HepG2 (cell line): ENCODE measurements at regions of chr21 and their contacts with region 1.

Region 1: GRCh38 chr21:36747815-36748383 is 49.0 kb downstream of the SIM2 start:
- DNase-seq: peak; percentile 23
- ATAC-seq: peak; percentile 87
- H3K4me3 ChIP-seq: peak overlapping the region; percentile 60 to 73 (median 68); a peak in 5 of 6 replicates
- H3K27ac ChIP-seq: no peak overlapping the region
- H3K4me1 ChIP-seq: peaks cover 12% of the 10 kb centered on the region
- H3K27me3 ChIP-seq: no peaks in the 10 kb centered on the region
- CTCF ChIP-seq: peak; percentile 34; the same call in 1 of the 2 replicates
- EP300 ChIP-seq: no peak
- POLR2A ChIP-seq: no peak
- RAD21 ChIP-seq: peak; percentile 38; the same call in 1 of the 2 replicates

Region 2: GRCh38 chr21:36730291-36731281 is 17.3 kb before region 1 on chr21:
- CTCF ChIA-PET with region 1: no interaction called
- POLR2A ChIA-PET with region 1: interaction called, 4 read pairs
- in situ Hi-C with region 1: no loop called
- intact Hi-C with region 1: loop called (anchors 2 kb)
- DNase-seq: peak; percentile 93
- ATAC-seq: peak; percentile 77
- H3K4me3 ChIP-seq: peak overlapping the region; percentile 19 to 62 (median 27); a peak in 3 of 6 replicates
- H3K27ac ChIP-seq: peak overlapping the region; percentile 56
- H3K4me1 ChIP-seq: peaks cover 52% of the 10 kb centered on the region
- H3K27me3 ChIP-seq: no peaks in the 10 kb centered on the region; a peak in 1 of 5 replicates
- CTCF ChIP-seq: no peak; the same call in 1 of the 2 replicates
- EP300 ChIP-seq: peak in 1 of 2 experiments; percentile 77; a peak in 3 of 4 replicates
- POLR2A ChIP-seq: no peak
- RAD21 ChIP-seq: no peak

Region 3: DNA sequence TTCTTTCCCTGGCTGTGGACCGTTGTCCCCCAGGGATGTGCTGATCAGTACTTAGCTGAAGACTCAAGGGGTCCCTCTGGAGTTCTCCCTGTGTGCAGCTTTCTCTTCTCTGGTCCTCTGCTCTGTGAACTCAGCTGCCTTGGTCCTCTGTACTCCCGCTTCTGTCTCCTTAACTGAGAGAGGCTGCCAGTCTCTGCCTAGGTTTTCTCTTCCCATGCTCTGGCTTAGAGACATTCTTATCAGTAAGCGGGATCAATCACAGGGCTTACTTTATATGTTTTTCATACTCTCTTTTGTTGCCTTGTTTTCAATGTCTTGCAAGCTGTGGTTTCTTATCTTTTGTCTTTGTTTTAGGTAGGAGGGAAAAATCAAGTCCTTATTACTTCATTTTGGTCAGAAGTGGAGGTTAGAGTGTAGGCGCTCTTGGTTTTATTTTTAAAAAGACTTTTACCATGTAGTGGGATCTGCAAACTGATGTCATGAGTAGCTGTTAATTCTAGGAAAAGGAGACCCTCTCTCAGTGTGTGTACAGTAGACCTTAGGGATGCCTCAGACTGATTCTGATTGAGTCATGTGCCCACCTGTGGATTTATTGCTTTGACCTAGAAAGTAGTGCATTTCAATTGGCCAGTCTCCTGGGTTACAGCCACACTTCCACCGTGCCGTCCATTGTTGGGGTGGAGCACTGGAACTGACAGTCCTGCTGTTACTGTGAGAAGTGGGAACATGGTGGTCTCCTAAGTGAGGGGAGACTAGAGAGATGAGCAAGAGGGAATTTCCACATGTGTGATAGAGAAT is 371.7 kb after region 1 on chr21:
- CTCF ChIA-PET with region 1: no interaction called
- POLR2A ChIA-PET with region 1: no interaction called
- in situ Hi-C with region 1: no loop called
- intact Hi-C with region 1: no loop called
- DNase-seq: peak; percentile 12
- ATAC-seq: peak; percentile 77
- H3K4me3 ChIP-seq: no peak overlapping the region
- H3K27ac ChIP-seq: peak overlapping the region; percentile 34
- H3K4me1 ChIP-seq: peaks cover 50% of the 10 kb centered on the region
- H3K27me3 ChIP-seq: no peaks in the 10 kb centered on the region
- CTCF ChIP-seq: peak; percentile 34
- EP300 ChIP-seq: no peak
- POLR2A ChIP-seq: no peak
- RAD21 ChIP-seq: no peak